Heart right ventricle (tissue), 16 donors: ENCODE measurements at regions of chr14 and their contacts with region 1.

Region 1: GRCh38 chr14:105203057-105203531 is 22.0 kb upstream of the NUDT14 start:
- DNase-seq: peak; percentile 72 to 84
- ATAC-seq: peak; percentile 26 to 67 (median 42)
- H3K4me3 ChIP-seq: no peak overlapping the region
- H3K27ac ChIP-seq: peak overlapping the region in 6 of 10 donors; percentile 23 to 84 (median 78)
- H3K4me1 ChIP-seq: peaks cover 30 to 92% (median 80%) of the 10 kb centered on the region in 9 donors
- H3K27me3 ChIP-seq: peaks cover 0 to 43% (median 2%) of the 10 kb centered on the region in 7 donors
- CTCF ChIP-seq: peak; percentile 90 to 98 (median 93)

Region 2: DNA sequence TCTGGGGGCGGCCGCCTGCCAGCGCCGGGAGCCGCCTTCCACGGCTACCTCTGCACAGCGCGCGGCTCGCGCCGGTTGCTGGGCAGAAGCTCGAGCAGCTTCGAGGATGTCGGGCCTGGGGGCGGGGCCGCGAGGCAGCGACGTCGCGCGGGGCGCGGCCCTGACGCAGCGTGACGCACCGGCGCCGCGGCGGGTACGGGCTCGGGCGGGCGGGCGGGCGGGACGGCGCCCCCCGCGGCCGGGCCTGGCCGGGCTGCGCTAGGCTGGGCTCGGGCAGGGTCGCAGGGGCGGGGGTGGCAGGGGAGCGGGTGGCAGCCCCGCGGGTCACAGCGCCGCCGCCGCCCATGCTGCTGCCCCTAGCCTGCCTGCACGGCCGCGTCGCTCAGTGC is 45.3 kb after region 1 on chr14 and contains the start of gene BTBD6:
- intact Hi-C with region 1: loop called in 1 of 10 experiments (anchors 1 kb)
- DNase-seq: peak; percentile 81 to 88
- ATAC-seq: peak; percentile 88 to 96 (median 94)
- H3K4me3 ChIP-seq: peak within 1 kb of the TSS; percentile 37 to 85 (median 62)
- H3K27ac ChIP-seq: peak within 1 kb of the TSS; percentile 73 to 98 (median 90)
- H3K4me1 ChIP-seq: peaks cover 10 to 35% (median 24%) of the 10 kb centered on the region in 9 donors
- H3K27me3 ChIP-seq: no peaks in the 10 kb centered on the region
- CTCF ChIP-seq: peak in 1 of 9 donors; percentile 15
- total RNA-seq, gene BTBD6: 28.1 to 49.7 (median 32.2) TPM

Region 3: DNA sequence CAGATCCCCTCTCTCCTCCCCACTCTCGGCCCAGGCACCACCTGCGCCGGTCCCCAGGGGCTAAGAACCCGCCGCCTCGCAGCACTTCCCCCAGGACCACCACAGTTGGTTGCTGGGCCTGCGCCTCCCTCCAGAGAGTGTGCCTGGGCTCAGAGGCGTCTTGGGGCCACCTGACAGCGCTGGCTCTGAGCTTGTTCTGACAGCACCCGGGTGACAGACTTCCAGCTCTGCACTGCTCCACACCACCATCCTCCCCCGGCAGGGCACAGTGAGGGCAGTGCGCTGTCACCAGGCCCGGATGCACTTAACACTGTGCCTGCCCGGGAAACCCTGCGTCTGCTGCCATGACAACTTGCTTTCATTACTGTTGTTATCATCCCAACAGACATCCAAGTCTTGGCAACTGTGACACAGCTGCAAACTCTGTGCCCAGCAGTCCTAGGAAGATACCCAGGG is 91.1 kb after region 1 on chr14:
- intact Hi-C with region 1: loop called in 3 of 10 experiments (anchors 5 to 10 kb)
- DNase-seq: peak; percentile 74 to 83
- ATAC-seq: peak; percentile 89 to 99 (median 96)
- H3K4me3 ChIP-seq: no peak overlapping the region
- H3K27ac ChIP-seq: peak overlapping the region in 9 of 10 donors; percentile 59 to 85 (median 69)
- H3K4me1 ChIP-seq: peaks cover 10 to 58% (median 34%) of the 10 kb centered on the region in 9 donors
- H3K27me3 ChIP-seq: no peaks in the 10 kb centered on the region
- CTCF ChIP-seq: no peak

Region 4: GRCh38 chr14:105346876-105347586 is 143.9 kb after region 1 on chr14:
- intact Hi-C with region 1: loop called (anchors 1 to 5 kb)
- DNase-seq: no peak
- ATAC-seq: no peak
- H3K4me3 ChIP-seq: no peak overlapping the region
- H3K27ac ChIP-seq: no peak overlapping the region
- H3K4me1 ChIP-seq: peaks cover 0 to 31% (median 18%) of the 10 kb centered on the region in 9 donors
- H3K27me3 ChIP-seq: no peaks in the 10 kb centered on the region
- CTCF ChIP-seq: no peak